Lower leg skin (tissue), 4 donors: ENCODE measurements at regions of chr6 and their contacts with region 1.

Region 1: GRCh38 chr6:23446394-23447046 is 679.5 kb upstream of the NRSN1 start:
- DNase-seq: no peak
- H3K4me3 ChIP-seq: no peak overlapping the region
- CTCF ChIP-seq: no peak
- POLR2A ChIP-seq: no peak

Region 2: DNA sequence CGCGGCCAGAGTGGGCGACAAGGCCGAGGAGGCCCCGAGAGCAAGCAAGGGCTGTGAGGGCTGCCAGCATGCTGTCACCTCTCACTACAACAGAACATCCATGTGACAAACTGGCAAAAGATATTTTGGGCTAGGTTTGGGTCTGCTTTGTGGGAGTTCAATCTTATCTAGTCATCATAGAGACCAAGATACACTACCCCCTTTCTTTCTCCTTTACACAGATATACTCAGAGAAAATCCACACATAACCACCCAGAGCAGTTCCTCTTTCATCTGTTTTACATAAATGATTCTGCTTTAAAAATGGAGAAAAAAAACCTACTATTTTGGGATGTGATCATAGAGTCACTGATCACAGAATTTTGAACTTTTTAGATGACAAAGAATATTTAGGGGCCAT is 1836.2 kb before region 1 on chr6:
- intact Hi-C with region 1: no loop called
- DNase-seq: no peak
- H3K4me3 ChIP-seq: no peak overlapping the region
- CTCF ChIP-seq: no peak
- POLR2A ChIP-seq: no peak

Region 3: DNA sequence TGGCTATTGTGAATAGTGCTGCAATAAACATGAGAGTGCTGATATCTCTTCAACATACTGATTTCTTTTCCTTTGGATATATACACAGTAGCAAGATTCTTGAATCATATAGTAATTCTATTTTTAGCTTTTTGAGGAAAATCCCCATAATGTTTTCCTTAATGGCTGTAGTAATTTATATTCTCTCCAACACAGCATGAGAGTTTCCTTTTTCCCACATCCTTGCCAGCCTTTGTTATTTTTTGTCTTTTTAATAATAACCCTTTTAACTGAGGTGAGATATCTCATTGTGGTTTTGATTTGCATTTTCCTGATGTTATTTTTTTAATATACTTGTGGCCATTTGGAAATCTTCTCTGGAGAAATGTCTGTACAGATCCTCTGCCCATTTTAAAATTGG is 1282.3 kb before region 1 on chr6:
- intact Hi-C with region 1: loop called (anchors 10 kb)
- DNase-seq: no peak
- H3K4me3 ChIP-seq: no peak overlapping the region
- CTCF ChIP-seq: no peak
- POLR2A ChIP-seq: no peak